SK-N-SH (cell line): ENCODE measurements at regions of chr9 and their contacts with region 1.

Region 1: DNA sequence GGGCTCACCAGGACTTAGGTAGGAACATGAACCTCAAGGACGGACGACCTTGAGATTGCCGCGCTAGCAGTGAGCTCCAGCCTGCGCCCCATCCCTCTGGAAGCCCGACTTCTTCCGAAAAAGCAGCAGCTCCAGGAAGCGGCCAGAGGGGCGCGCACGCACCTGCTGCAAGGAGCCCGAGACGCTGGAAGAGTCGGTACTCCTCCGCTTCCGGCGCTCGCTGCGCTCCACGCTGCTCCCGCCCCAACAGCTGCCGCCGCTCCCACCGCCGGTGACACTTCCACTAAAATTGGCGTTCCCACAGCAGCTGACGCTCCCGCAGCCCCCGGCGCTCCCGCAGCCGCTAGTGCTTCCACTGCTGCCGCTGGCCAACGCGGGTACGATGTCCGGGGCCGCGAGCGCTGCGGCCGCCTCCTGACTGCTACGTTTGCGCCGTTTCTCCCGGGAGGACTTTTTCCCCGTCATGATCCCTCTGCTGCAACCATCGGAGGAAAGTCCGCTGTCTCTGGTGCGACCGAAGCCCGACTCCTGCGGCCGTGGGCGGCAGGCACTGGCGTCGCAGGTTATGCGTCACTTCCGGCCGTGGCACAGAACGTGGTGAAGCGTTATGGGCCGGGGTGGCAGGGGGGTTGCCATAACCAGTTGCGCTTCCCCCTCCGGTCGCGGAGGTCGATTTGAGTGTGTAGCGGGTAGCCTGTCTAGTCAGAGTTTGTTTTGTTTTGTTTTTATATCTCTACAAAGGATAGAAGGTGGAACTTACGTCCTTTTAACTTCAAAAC is at the start of gene CAAP1:
- DNase-seq: peak; percentile 95
- H3K4me3 ChIP-seq: peak within 1 kb of the TSS; percentile 93 to 94
- H3K27ac ChIP-seq: peak within 1 kb of the TSS; percentile 95 to 96
- H3K4me1 ChIP-seq: peaks cover 0 to 4% of the 10 kb centered on the region in 2 experiments; a peak in 2 of 4 replicates
- H3K27me3 ChIP-seq: no peaks in the 10 kb centered on the region
- CTCF ChIP-seq: peak; percentile 46
- EP300 ChIP-seq: peak in 1 of 2 experiments; percentile 7; a peak in 1 of 4 replicates
- RAD21 ChIP-seq: peak; percentile 37
- polyA plus RNA-seq, gene CAAP1: 20.8 and 21.3 TPM in 2 replicates

Region 2: GRCh38 chr9:26955921-26956859 is 63.8 kb after region 1 on chr9 and contains the start of gene IFT74:
- CTCF ChIA-PET with region 1: interaction called, 5 read pairs
- POLR2A ChIA-PET with region 1: interaction called, 13 read pairs
- DNase-seq: peak; percentile 94
- H3K4me3 ChIP-seq: peak within 1 kb of the TSS; percentile 70 to 80
- H3K27ac ChIP-seq: peak within 1 kb of the TSS; percentile 89 to 96
- H3K4me1 ChIP-seq: peaks cover 0 to 9% of the 10 kb centered on the region in 2 experiments; a peak in 2 of 4 replicates
- H3K27me3 ChIP-seq: no peaks in the 10 kb centered on the region
- CTCF ChIP-seq: no peak
- EP300 ChIP-seq: no peak
- RAD21 ChIP-seq: no peak
- polyA plus RNA-seq, gene IFT74: 6.3 and 7.3 TPM in 2 replicates

Region 3: DNA sequence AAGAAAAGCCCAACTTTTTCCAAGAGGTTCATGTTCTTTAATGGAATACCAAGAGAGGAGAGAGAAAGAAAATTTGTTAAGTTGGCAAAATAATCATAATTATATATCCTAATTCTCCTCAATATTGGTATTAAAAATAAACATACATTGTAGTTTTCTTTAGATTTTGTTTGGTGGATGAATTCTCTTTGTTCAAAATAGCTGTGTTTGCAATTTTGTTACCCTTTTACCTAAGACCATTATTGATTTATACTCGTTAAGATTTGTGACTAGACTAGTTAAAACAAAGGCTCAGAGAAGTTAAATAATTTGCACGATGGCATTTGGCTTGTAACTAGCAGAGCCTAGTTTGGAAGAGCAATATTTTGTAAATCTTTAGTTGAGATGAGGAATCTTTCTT is 103.4 kb after region 1 on chr9:
- CTCF ChIA-PET with region 1: no interaction called
- POLR2A ChIA-PET with region 1: no interaction called
- DNase-seq: no peak
- H3K4me3 ChIP-seq: no peak overlapping the region
- H3K27ac ChIP-seq: no peak overlapping the region
- H3K4me1 ChIP-seq: no peaks in the 10 kb centered on the region; a peak in 1 of 4 replicates
- H3K27me3 ChIP-seq: no peaks in the 10 kb centered on the region
- CTCF ChIP-seq: no peak
- EP300 ChIP-seq: no peak
- RAD21 ChIP-seq: no peak